AG04450 (cell line): ENCODE measurements at regions of chr1 and their contacts with region 1.

Region 1: DNA sequence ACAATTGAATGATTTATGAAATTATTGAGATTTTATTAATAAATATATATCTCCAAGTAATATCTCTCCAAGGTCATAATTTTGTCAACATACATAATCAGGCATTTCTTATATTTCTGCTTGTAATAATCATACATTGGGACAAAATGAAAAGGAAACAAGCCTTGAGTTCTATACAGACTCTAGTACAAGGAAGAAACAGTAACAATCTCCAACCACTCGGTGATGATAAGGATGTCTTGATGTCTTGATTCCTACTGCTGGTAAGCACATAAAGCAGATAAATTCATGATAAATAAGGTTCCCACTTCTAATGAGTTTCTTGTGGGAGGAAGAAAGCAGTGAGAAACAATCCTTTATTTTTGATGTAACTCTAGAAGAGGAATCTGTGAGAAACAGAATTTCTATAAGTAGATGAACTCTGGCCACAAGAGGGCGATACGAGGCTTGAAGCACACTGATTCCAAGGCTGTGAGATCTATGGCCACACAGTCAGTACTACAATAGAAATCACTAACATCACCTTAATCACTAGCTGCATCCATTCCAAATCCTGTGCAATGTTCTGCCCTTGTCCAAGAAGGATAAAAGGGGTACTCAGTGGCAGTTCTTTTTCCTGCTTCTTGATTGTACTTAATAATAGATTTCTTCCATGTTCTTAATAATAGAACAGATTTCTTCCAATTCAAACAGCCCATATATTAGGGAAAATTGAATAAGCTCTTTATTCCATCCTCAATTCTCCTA is 41.4 kb upstream of the LRRC8B start:
- DNase-seq: peak; percentile 66
- H3K4me3 ChIP-seq: no peak overlapping the region
- H3K27ac ChIP-seq: no peak overlapping the region
- H3K27me3 ChIP-seq: no peaks in the 10 kb centered on the region
- CTCF ChIP-seq: peak; percentile 82

Region 2: GRCh38 chr1:89516055-89516454 is 32.9 kb after region 1 on chr1:
- CTCF ChIA-PET with region 1: interaction called, 10 read pairs
- POLR2A ChIA-PET with region 1: no interaction called
- DNase-seq: no peak
- H3K4me3 ChIP-seq: no peak overlapping the region
- H3K27ac ChIP-seq: no peak overlapping the region
- H3K27me3 ChIP-seq: no peaks in the 10 kb centered on the region
- CTCF ChIP-seq: no peak

Region 3: GRCh38 chr1:89598450-89599331 is 115.5 kb after region 1 on chr1:
- CTCF ChIA-PET with region 1: interaction called, 62 read pairs
- POLR2A ChIA-PET with region 1: no interaction called
- DNase-seq: no peak
- H3K4me3 ChIP-seq: no peak overlapping the region
- H3K27ac ChIP-seq: no peak overlapping the region
- H3K27me3 ChIP-seq: no peaks in the 10 kb centered on the region
- CTCF ChIP-seq: peak; percentile 69

Region 4: DNA sequence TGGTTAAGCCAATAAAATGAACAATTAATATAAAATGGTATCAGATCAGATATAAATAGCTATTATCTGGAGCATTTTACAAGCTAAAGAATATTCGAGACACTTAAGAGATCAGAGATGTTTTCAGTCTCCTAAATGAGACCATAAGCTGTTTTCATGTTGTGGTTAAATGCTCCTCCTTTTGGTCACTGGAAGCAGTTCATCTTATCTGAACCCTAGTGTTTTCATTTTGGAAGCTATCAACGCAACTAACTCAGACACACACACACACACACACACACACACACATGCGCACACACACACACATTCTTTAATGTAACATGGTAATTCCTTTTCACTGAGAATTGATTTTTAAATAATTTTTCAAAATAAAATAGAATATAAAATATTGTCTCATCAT is 139.7 kb after region 1 on chr1:
- CTCF ChIA-PET with region 1: interaction called, 41 read pairs
- POLR2A ChIA-PET with region 1: no interaction called
- DNase-seq: no peak
- H3K4me3 ChIP-seq: no peak overlapping the region
- H3K27ac ChIP-seq: no peak overlapping the region
- H3K27me3 ChIP-seq: no peaks in the 10 kb centered on the region
- CTCF ChIP-seq: peak; percentile 41

Region 5: DNA sequence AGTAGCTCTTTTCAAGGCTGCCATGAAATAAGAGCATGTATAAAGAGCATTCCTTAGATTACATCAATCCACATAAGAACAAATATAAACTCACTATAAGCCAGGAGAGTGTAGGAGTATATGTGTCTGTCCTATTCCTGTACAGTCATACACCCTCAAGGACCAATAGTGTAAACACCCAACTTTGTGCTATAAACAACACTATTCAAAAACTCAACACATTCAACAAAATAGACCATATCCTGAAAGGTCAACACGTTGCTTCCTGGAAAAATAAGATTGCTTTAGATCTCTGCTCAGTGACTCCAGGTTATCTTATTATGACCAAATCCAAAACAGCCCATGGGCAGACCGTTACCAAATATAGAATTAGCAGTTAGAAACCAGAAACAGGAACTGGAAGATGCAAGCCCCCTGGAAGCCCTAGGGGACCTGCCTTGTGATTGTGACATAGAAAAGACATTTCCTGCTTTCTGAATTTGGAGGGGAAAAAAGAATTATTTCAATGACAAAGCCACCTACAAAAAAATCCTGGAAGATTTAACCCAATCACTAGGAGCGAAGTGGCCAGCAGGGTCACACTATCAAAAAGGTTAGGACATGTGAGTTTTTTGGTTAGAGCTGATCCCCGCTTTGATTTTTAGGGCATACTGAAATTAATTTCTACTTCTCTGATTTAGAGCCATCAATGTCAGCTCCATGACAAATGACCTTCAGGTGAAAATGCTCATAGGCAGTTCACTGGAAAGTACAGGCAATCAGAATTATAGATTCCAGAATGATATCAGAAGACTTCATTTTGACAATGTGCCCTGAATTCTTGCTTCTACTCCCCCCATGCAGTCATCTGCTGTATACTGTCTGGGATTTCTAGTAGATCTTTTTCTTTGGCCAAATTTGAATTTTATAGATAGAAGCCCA is 209.7 kb after region 1 on chr1:
- CTCF ChIA-PET with region 1: no interaction called
- POLR2A ChIA-PET with region 1: no interaction called
- DNase-seq: peak; percentile 45
- H3K4me3 ChIP-seq: no peak overlapping the region
- H3K27ac ChIP-seq: no peak overlapping the region
- H3K27me3 ChIP-seq: no peaks in the 10 kb centered on the region
- CTCF ChIP-seq: no peak